ENCODE measurements at regions of chr19 and their contacts with region 1.

Region 1: GRCh38 chr19:3821857-3822364 is 35.7 kb upstream of the MATK start:
- DNase-seq: peak; percentile 94
- H3K4me3 Mint-ChIP-seq: peak overlapping the region; percentile 23
- H3K27ac Mint-ChIP-seq: no peak overlapping the region
- H3K4me1 Mint-ChIP-seq: peaks cover 17% of the 10 kb centered on the region
- H3K27me3 Mint-ChIP-seq: no peaks in the 10 kb centered on the region

Region 2: DNA sequence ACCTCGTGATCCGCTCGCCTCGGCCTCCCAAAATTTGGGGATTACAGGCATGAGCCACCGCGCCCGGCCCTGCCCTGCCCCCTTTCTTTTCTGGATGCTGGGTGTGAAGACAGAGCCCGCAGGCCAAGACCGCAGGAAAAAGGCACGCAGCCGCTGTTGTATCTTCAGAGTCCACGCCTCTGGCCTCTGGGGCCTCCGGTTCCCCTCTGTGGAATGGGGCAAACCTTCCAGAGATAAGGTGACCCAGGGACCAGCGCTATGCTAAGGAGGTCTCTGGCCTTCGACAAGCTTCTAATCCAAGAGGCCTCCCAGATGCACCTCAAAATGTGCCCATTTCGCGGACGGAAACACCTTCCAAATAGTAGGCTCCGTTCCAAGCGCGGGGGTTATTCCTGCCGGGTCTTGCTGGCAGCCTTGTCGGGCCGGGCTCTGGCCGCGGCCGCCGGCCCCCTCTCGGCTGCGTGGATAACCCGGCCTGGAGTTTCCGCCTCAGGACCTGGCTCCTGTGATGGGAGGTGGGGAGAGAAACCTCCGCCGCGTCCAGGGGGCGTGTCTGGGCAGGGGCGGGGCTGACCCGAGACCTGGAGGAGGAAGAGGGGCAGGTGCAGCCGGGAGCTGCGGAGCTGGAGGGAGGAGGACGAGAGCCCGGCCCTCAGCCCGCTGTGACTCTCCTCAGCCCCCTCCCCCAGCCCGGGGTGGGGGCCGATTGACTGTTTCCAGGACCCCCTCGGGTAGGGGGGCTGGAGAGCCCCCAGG is 100.6 kb before region 1 on chr19:
- CTCF ChIA-PET with region 1: interaction called, 8 read pairs
- POLR2A ChIA-PET with region 1: no interaction called
- intact Hi-C with region 1: loop called (anchors 2 kb)
- DNase-seq: peak; percentile 94
- H3K4me3 Mint-ChIP-seq: peak overlapping the region; percentile 55
- H3K27ac Mint-ChIP-seq: no peak overlapping the region
- H3K4me1 Mint-ChIP-seq: peaks cover 7% of the 10 kb centered on the region
- H3K27me3 Mint-ChIP-seq: peaks cover 4% of the 10 kb centered on the region

Region 3: GRCh38 chr19:3783660-3784584 is 38.0 kb before region 1 on chr19:
- CTCF ChIA-PET with region 1: interaction called, 36 read pairs
- POLR2A ChIA-PET with region 1: interaction called, 6 read pairs
- intact Hi-C with region 1: loop called (anchors 2 kb)
- DNase-seq: peak; percentile 65
- H3K4me3 Mint-ChIP-seq: peak overlapping the region; percentile 77
- H3K27ac Mint-ChIP-seq: no peak overlapping the region
- H3K4me1 Mint-ChIP-seq: peaks cover 8% of the 10 kb centered on the region
- H3K27me3 Mint-ChIP-seq: no peaks in the 10 kb centered on the region

Region 4: DNA sequence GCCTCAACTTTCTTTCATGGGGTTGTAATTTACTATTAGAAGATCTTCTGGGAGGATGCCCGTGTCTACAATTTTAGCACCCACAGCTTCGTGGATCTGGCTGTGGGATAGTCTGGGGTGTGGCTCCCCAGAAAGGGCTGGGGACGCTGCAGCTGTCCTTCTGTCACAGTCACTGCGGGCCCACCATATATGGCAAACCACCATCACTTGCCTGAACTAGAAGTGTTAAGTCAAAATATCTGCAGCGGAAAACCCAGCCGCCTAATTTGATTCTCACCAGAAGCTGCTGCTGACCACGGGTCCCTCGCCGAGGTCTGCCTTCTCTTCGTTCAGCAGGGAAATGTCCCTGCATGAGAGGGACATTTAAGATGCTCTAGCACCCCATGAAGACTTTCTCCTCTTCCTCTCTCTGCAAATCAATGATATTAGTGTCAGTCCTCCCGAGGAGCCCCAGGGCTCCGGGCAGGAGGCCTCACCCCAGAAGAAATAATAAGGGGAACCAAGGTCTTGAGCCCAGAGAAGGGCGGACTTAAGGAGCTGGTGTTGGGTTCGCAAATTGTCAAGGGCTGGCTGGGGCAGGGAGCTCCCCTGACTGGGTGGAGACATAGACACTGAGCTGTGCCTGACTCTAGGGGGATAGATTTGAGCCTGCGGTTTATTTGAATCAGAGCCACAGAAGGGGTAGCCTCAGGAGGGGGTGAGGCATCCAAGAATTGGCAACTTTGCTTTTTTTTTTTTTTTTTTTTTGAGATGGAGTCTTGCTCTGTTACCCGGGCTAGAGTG is 32.7 kb before region 1 on chr19:
- CTCF ChIA-PET with region 1: interaction called, 36 read pairs
- POLR2A ChIA-PET with region 1: interaction called, 6 read pairs
- intact Hi-C with region 1: no loop called
- DNase-seq: no peak
- H3K4me3 Mint-ChIP-seq: no peak overlapping the region
- H3K27ac Mint-ChIP-seq: no peak overlapping the region
- H3K4me1 Mint-ChIP-seq: peaks cover 8% of the 10 kb centered on the region
- H3K27me3 Mint-ChIP-seq: no peaks in the 10 kb centered on the region

Region 5: DNA sequence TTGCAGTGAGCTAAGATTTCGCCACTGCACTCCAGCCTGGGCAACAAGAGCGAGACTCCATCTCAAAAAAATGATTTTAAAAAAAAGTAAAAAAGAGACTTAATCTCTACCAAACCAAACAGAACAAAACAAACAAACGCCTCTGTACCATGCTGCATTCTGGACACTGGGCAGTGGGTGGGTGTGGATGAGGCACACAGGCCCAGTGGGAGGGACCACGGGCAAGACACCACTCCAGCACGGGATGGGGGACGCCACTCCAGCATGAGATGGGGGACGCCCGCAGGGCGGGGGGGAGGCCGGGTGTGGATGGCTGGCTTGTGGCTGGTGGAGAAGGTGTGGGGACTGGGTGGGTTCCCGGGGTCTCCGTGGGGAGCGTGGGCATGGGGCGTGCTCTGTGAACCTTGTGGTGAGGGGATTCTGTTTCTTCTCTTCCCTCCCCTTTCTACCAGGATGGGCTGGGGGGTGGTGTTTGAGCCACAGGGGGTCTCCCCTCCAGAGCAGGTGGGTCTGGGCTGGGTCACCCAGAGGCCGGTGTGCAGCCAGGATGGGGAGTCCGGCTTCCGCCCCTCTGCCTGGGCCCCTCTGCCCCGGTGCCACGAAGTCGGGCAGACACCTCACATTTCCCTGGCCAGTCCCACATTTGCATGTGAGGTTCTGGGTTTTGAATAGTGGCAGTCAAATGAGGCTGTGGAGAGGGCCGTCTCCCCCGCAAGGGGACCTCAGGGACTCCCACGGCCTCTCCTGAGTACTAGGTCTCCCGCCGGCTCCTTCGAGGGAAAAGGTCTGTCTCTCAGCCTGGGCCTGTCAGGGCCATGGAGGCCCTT is 11.8 kb before region 1 on chr19:
- CTCF ChIA-PET with region 1: interaction called, 23 read pairs
- POLR2A ChIA-PET with region 1: no interaction called
- intact Hi-C with region 1: no loop called
- DNase-seq: peak; percentile 58
- H3K4me3 Mint-ChIP-seq: no peak overlapping the region
- H3K27ac Mint-ChIP-seq: peak overlapping the region; percentile 42
- H3K4me1 Mint-ChIP-seq: peaks cover 51% of the 10 kb centered on the region
- H3K27me3 Mint-ChIP-seq: no peaks in the 10 kb centered on the region